Prostate gland (tissue), 2 donors: ENCODE measurements at regions of chr20 and their contacts with region 1.

Region 1: GRCh38 chr20:4613718-4614620 is 107.7 kb upstream of the PRND start:
- DNase-seq: no peak
- H3K4me3 ChIP-seq: no peak overlapping the region
- H3K27ac ChIP-seq: no peak overlapping the region
- H3K4me1 ChIP-seq: no peaks in the 10 kb centered on the region
- H3K27me3 ChIP-seq: no peaks in the 10 kb centered on the region
- CTCF ChIP-seq: peak in 2 of 4 experiments; percentile 38 to 39
- POLR2A ChIP-seq: no peak

Region 2: DNA sequence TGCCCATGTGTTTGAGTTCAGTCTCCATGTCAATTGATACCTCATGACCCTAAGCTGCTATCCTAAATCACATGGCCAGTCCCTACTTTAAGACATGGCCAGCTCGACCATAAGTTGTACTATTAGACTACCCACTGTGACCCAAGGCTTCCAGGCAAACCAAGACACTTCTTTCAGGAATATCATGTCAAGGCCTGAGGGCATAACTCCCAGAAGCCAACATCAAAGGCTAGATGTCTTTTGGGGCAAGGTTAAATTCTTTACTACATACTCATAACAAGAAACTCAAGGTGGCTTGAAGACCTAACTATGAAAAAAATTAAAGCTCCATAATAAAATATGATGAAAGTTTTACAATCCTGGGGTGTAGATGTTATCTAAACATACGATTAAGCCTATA is 120.6 kb before region 1 on chr20:
- intact Hi-C with region 1: no loop called
- DNase-seq: no peak
- H3K4me3 ChIP-seq: no peak overlapping the region
- H3K27ac ChIP-seq: no peak overlapping the region
- H3K4me1 ChIP-seq: no peaks in the 10 kb centered on the region
- H3K27me3 ChIP-seq: no peaks in the 10 kb centered on the region
- CTCF ChIP-seq: no peak
- POLR2A ChIP-seq: no peak

Region 3: DNA sequence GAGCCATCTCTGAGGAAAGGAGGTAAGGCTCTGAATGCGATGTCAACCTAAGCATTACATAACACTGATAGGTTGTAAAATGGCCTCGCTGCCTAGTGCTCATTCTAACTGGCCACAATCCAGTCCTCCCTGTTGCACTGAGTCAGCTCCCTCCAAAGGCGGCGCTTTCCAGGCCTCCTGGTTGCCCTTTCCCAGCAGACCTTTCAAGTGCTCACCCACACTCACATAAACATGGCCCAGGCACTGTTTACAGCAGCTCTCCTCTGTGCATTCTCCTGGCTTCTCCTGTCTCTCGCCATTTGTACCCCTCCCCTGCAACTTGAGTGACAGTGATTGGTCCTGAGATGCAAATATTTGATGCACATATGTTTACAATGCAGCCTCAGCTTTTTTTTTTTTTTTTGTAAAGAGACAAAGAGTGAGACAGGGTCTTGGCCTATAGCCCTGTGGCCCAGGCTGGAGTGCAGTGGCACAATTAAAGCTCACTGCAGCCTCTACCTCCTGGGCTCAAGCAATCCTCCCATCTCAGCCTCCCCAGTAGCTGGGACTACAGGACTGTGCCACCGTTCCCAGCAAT is 71.0 kb after region 1 on chr20:
- intact Hi-C with region 1: loop called (anchors 2 kb)
- DNase-seq: no peak
- H3K4me3 ChIP-seq: no peak overlapping the region
- H3K27ac ChIP-seq: no peak overlapping the region
- H3K4me1 ChIP-seq: peaks cover 7% of the 10 kb centered on the region
- H3K27me3 ChIP-seq: no peaks in the 10 kb centered on the region
- CTCF ChIP-seq: no peak
- POLR2A ChIP-seq: no peak